ENCODE measurements at regions of chr19 and their contacts with region 1.

Region 1: DNA sequence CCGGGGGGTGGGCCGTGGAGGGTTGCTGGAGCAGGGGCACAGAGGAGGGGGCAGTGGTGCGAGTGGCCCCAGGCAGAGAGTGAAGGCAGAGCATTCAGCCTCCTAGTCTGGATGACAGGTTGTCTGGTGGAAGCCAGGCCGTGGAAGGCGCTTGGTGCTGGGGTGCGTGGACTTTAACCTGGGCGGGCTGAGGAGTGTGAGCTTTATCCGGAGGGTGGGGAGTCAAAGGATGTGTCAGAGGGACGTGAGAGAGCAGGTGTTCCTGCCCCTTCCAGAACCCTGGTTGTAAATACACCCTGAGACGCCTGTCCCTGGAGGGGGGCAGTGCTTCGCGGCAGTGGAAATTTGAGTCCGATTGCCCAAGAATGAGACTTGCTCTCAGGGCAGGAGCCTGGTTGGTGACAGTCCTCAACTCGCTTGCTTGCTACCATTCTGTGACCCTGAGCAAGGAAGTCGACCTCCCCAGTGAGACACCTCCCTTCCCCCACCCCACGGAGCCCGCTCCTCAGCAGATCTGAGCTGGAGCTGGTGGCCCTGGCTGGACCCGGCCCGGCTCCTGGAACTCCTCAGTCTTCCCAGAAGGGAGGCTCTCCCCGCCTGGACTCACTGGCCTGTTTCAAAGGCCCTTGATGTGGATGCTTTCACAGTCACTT is 2.3 kb downstream of the SPPL2B start:
- DNase-seq: peak; percentile 90 to 93
- H3K4me3 ChIP-seq: peak overlapping the region; percentile 19
- H3K4me3 Mint-ChIP-seq: peak overlapping the region; percentile 87
- H3K27ac Mint-ChIP-seq: peak overlapping the region; percentile 94
- H3K4me1 ChIP-seq: peaks cover 33% of the 10 kb centered on the region
- H3K4me1 Mint-ChIP-seq: peaks cover 32% of the 10 kb centered on the region
- H3K27me3 ChIP-seq: no peaks in the 10 kb centered on the region
- H3K27me3 Mint-ChIP-seq: no peaks in the 10 kb centered on the region
- CTCF ChIP-seq: no peak

Region 2: DNA sequence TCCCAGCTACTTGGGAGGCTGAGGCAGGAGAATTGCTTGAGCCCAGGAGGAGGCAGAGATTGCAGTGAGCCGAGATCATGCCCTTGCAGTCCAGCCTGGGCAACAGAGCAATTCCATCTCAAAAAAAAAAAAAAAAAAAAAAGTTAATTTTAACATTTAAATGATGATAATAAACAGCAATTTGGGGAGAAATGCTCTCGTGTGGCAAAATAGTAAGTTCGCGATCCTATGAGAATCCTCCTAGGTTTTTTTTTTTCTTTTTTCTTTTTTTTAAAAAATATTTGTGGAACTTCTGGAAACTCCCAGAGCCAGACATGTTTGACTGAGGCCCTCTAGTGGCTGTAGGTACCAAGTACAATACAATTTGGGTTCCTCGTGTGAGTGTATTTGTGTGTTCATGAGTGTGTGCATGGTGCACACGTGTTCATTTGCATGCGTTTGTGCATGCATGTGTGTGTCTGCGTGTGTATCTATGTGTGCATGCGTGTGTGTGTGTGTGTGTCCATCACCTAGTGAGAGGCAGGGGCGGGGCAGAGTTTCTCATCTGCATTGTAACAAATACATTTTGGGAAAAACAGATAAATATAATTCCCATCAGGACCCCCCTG is 60.5 kb after region 1 on chr19:
- CTCF ChIA-PET with region 1: interaction called, 3 read pairs
- POLR2A ChIA-PET with region 1: no interaction called
- intact Hi-C with region 1: loop called (anchors 2 kb)
- DNase-seq: peak; percentile 53 to 56
- H3K4me3 ChIP-seq: no peak overlapping the region
- H3K4me3 Mint-ChIP-seq: no peak overlapping the region
- H3K27ac Mint-ChIP-seq: no peak overlapping the region
- H3K4me1 ChIP-seq: peaks cover 15% of the 10 kb centered on the region
- H3K4me1 Mint-ChIP-seq: peaks cover 6% of the 10 kb centered on the region
- H3K27me3 ChIP-seq: no peaks in the 10 kb centered on the region
- H3K27me3 Mint-ChIP-seq: no peaks in the 10 kb centered on the region
- CTCF ChIP-seq: peak; percentile 77 to 78

Region 3: GRCh38 chr19:2461751-2462634 is 131.2 kb after region 1 on chr19:
- CTCF ChIA-PET with region 1: no interaction called
- POLR2A ChIA-PET with region 1: no interaction called
- intact Hi-C with region 1: no loop called
- DNase-seq: no peak
- H3K4me3 ChIP-seq: no peak overlapping the region
- H3K4me3 Mint-ChIP-seq: peak overlapping the region; percentile 55
- H3K27ac Mint-ChIP-seq: no peak overlapping the region
- H3K4me1 ChIP-seq: no peaks in the 10 kb centered on the region
- H3K4me1 Mint-ChIP-seq: no peaks in the 10 kb centered on the region
- H3K27me3 ChIP-seq: no peaks in the 10 kb centered on the region
- H3K27me3 Mint-ChIP-seq: no peaks in the 10 kb centered on the region
- CTCF ChIP-seq: no peak

Region 4: GRCh38 chr19:3366753-3367627 is 1036.2 kb after region 1 on chr19:
- CTCF ChIA-PET with region 1: no interaction called
- POLR2A ChIA-PET with region 1: no interaction called
- intact Hi-C with region 1: no loop called
- DNase-seq: no peak
- H3K4me3 ChIP-seq: peak overlapping the region; percentile 36
- H3K4me3 Mint-ChIP-seq: peak overlapping the region; percentile 28
- H3K27ac Mint-ChIP-seq: no peak overlapping the region
- H3K4me1 ChIP-seq: no peaks in the 10 kb centered on the region
- H3K4me1 Mint-ChIP-seq: peaks cover 6% of the 10 kb centered on the region
- H3K27me3 ChIP-seq: peaks cover 2% of the 10 kb centered on the region
- H3K27me3 Mint-ChIP-seq: peaks cover 32% of the 10 kb centered on the region
- CTCF ChIP-seq: no peak